ENCODE measurements at regions of chr20 and their contacts with region 1.

Region 1: DNA sequence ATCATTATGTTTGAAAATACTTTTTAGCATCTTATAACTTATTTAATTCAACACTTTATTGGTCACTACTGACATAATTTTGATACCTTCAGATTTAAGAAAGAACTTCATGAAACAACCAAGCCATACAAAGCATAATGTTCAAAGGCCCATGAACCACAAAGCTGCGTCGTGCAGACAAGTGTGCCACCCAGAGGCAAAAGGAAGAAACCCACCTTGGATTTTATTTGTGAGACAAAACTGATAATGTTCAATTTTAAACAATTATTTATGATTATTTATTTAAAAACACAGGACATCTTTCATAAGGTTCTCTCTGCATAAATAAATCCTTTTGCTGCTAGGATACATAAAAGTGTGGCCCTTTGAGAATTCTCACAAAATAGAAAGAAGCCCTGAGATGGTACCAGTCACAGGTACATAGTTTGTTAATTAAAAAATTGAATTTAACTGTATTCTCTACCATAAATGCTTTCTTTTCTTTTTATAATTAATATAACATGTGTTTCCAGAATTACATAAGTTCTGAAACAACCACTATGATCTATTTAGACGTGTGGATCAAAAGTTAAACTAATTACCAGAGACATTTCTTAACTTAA is 143.7 kb downstream of the RALGAPA2 start:
- DNase-seq: peak; percentile 31
- H3K4me3 ChIP-seq: no peak overlapping the region; a peak in 1 of 4 replicates
- H3K27ac ChIP-seq: no peak overlapping the region
- H3K4me1 ChIP-seq: no peaks in the 10 kb centered on the region; a peak in 1 of 4 replicates
- H3K27me3 ChIP-seq: no peaks in the 10 kb centered on the region
- CTCF ChIP-seq: peak; percentile 89
- EP300 ChIP-seq: no peak
- RAD21 ChIP-seq: peak; percentile 97

Region 2: DNA sequence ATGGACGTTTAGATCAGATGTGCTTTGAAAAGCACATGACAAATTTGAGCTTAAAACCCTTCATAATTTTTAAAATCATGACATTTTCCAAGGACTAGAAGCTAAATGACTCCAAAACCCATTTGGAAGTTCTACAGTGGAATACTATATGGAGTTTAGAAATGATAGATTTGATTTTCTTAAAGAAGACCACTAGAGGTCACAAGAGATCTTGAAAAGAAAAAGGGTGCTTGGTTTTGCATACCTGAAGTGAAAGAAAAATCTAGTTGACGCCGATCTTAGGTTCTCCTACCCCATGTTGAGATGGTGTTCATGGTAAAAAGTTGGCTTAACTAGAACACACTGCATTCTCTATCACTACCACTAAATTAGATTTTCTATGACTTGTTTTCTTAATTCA is 484.9 kb before region 1 on chr20:
- CTCF ChIA-PET with region 1: interaction called, 16 read pairs
- POLR2A ChIA-PET with region 1: no interaction called
- DNase-seq: peak; percentile 31
- H3K4me3 ChIP-seq: no peak overlapping the region
- H3K27ac ChIP-seq: no peak overlapping the region
- H3K4me1 ChIP-seq: no peaks in the 10 kb centered on the region; a peak in 2 of 4 replicates
- H3K27me3 ChIP-seq: peaks cover 4% of the 10 kb centered on the region; the same call in 1 of the 2 replicates
- CTCF ChIP-seq: peak; percentile 69
- EP300 ChIP-seq: no peak
- RAD21 ChIP-seq: peak; percentile 84

Region 3: DNA sequence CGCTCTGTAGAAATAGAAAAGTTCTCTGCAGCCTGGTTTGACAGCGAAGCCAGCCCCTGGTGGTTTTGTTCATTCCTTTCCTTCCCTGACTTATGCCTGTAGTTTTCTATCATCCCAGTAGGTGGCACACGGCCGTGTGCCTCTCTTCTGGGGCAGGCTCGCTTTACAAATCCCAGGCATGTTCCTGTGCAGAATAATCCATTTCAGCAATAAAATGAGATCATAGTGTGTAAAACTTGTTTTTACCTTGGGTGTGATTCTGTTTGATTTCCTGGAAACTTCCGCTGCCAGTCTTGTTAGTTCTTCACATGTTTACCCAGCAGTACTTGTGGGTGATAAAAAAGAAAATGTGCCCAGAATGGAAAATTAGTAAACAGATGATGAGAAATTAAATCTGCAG is 208.2 kb before region 1 on chr20:
- CTCF ChIA-PET with region 1: interaction called, 34 read pairs
- POLR2A ChIA-PET with region 1: no interaction called
- DNase-seq: peak; percentile 79
- H3K4me3 ChIP-seq: peak overlapping the region in 1 of 2 experiments; percentile 36; a peak in 1 of 4 replicates
- H3K27ac ChIP-seq: no peak overlapping the region
- H3K4me1 ChIP-seq: no peaks in the 10 kb centered on the region
- H3K27me3 ChIP-seq: peaks cover 44% of the 10 kb centered on the region
- CTCF ChIP-seq: peak; percentile 79
- EP300 ChIP-seq: no peak
- RAD21 ChIP-seq: peak; percentile 81

Region 4: DNA sequence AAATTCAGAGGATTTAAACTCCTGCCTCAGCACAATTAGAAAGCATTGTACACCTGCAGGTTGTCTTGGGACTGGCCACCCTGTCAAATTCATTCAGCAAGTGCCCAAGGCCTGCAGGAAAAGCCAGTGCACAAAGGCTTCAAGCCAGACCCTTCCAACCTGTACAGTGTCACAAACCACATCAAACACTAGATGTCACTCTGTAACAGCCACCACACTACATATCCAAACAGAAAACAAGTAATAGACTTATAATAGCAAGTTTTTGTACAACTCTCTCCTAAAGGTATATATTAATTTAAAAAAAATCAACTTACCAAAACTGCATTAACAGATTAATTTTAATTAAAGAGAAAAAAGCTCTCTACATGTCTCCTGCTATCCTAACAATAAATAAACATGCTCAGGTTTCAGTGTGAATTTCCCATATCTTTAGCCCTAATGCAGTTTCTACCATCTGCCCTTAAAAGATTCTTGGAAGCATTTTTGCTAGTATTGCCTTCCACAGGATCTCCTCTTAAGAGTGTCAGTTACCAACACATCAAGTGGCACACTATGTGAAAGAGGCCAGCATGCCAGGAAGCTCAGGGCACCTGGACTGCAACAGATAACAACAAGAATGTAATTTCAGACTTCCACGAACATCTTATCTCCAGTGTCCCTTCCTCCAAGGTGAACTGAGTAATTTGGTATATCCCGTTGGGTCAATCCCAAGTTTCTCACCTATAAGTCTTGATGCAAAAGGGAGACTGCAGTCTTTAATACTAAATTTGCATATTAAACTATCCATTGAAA is 96.3 kb after region 1 on chr20:
- CTCF ChIA-PET with region 1: no interaction called
- POLR2A ChIA-PET with region 1: no interaction called
- DNase-seq: peak; percentile 33
- H3K4me3 ChIP-seq: no peak overlapping the region
- H3K27ac ChIP-seq: no peak overlapping the region
- H3K4me1 ChIP-seq: no peaks in the 10 kb centered on the region; a peak in 2 of 4 replicates
- H3K27me3 ChIP-seq: no peaks in the 10 kb centered on the region
- CTCF ChIP-seq: peak; percentile 58
- EP300 ChIP-seq: no peak
- RAD21 ChIP-seq: peak; percentile 84

Region 5: GRCh38 chr20:21202284-21202683 is 633.6 kb after region 1 on chr20:
- CTCF ChIA-PET with region 1: no interaction called
- POLR2A ChIA-PET with region 1: no interaction called
- DNase-seq: no peak
- H3K4me3 ChIP-seq: no peak overlapping the region
- H3K27ac ChIP-seq: no peak overlapping the region
- H3K4me1 ChIP-seq: no peaks in the 10 kb centered on the region
- H3K27me3 ChIP-seq: no peaks in the 10 kb centered on the region
- CTCF ChIP-seq: no peak
- EP300 ChIP-seq: no peak
- RAD21 ChIP-seq: no peak

Measured in SK-N-SH (cell line).